Right ventricle myocardium inferior (tissue), 1 donor: ENCODE measurements at regions of chr2 and their contacts with region 1.

Region 1: GRCh38 chr2:68362069-68362468 is 3.0 kb upstream of the PLEK start:
- DNase-seq: peak; percentile 92
- ATAC-seq: peak; percentile 71

Region 2: GRCh38 chr2:68441179-68441993 is 79.3 kb after region 1 on chr2:
- intact Hi-C with region 1: loop called (anchors 2 kb)
- DNase-seq: peak; percentile 83
- ATAC-seq: peak; percentile 93

Region 3: DNA sequence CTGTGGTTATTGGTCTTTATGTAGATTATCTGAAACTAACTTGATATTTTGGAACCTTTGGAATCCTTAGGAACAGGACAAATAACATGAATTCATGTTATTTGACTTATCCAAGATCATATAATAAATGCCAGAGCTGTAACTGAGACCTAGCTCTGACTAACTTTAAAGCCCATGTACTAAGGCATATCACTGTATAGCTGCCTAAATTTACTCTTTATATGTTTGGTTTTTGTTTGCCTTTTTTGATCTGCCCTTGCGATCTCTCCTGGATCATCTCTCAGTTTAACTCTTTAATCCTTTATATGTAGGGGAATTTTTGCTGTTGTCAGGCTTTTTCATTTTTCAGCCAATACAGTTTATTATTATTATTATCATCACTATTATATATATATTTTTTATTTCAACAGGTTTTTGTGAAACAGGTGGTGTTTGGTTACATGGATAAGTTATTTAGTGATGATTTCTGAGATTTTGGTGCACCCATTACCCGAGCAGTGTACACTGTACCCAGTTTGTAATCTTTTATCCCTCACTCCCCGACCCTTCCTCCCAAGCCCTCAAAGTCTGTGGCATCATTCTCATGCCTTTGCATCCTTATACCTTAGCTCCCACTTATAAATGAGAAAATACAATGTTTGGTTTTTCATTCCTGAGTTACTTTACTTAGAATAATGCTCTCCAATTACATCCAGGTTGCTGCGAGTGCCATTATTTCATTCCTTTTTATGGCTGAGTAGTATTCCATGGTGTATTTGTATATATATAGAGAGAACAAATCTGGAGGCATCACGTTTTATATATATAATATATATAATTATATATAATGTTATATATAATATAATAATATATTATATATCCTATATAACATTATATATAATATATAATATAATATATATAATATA is 154.2 kb after region 1 on chr2:
- intact Hi-C with region 1: no loop called
- DNase-seq: no peak
- ATAC-seq: no peak